ENCODE measurements at regions of chr19 and their contacts with region 1.

Region 1: GRCh38 chr19:10543420-10544241 is at the start of gene ATG4D:
- DNase-seq: peak; percentile 94
- H3K4me3 ChIP-seq: peak within 1 kb of the TSS; percentile 99
- H3K27ac ChIP-seq: peak within 1 kb of the TSS; percentile 89
- H3K4me1 ChIP-seq: peaks cover 8% of the 10 kb centered on the region
- H3K27me3 ChIP-seq: no peaks in the 10 kb centered on the region
- CTCF ChIP-seq: no peak
- total RNA-seq, gene ATG4D: 69.0 to 89.9 TPM

Region 2: DNA sequence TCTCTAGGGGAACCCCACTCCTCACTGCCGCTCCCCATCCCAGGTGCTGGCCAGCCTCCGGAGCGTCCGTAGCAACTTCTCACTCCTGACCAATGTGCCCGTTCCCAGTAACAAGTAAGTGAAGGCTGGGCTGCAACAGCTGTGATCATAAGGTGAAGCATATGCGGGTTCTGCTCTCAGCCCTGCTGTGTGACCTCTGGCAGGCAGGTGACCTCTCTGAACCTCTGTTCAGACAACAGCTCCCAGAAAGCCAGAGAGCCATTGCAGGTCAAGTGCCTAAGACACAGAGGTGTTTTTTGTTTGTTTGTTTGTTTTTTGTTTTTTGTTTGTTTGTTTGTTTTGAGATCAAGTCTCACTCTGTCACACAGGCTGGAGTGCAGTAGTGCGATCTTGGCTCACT is 94.6 kb before region 1 on chr19:
- intact Hi-C with region 1: no loop called
- DNase-seq: no peak
- H3K4me3 ChIP-seq: no peak overlapping the region
- H3K27ac ChIP-seq: no peak overlapping the region
- H3K4me1 ChIP-seq: no peaks in the 10 kb centered on the region
- H3K27me3 ChIP-seq: no peaks in the 10 kb centered on the region
- CTCF ChIP-seq: no peak

Region 3: GRCh38 chr19:10568826-10569651 is 25.4 kb after region 1 on chr19 and contains the start of gene CDKN2D:
- intact Hi-C with region 1: loop called (anchors 2 kb)
- DNase-seq: peak; percentile 100
- H3K4me3 ChIP-seq: peak within 1 kb of the TSS; percentile 70
- H3K27ac ChIP-seq: peak within 1 kb of the TSS; percentile 84
- H3K4me1 ChIP-seq: peaks cover 14% of the 10 kb centered on the region
- H3K27me3 ChIP-seq: no peaks in the 10 kb centered on the region
- CTCF ChIP-seq: peak; percentile 31
- total RNA-seq, gene CDKN2D: 11.1 to 13.4 TPM